ENCODE measurements at regions of chr7 and their contacts with region 1.

Region 1: DNA sequence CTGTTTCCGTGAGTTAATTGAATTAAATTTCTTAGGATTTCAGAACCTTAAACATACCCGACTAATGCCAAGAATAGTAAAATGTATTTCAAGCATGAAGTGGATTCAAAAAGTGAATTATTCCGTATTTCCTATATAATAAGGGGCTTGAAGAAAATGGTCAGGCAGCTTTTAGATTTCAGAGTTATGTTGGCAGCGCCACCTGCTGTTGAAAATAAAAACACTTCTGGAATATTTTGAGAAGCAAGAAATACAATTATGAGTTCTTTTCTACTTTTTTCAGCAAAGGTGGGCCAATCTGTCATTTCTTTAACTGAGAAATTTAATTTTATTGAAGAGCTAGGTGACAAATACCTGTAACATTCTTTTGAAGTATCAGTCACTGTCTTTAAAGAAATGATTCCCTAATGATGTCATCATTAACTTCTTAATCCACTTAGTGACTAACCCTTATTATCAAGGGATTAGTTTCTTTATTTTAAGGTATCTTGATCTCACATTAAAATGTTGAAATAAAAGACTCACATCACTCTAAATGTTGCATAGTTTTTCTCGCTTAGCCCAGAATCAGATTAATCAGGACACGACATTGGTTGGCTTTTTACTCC is 36.6 kb upstream of the AGR3 start:
- DNase-seq: peak; percentile 28
- ATAC-seq: no peak
- H3K4me3 Mint-ChIP-seq: no peak overlapping the region
- H3K27ac Mint-ChIP-seq: no peak overlapping the region
- H3K4me1 Mint-ChIP-seq: peaks cover 12% of the 10 kb centered on the region
- H3K27me3 Mint-ChIP-seq: peaks cover 2% of the 10 kb centered on the region

Region 2: GRCh38 chr7:16078076-16078952 is 840.1 kb before region 1 on chr7:
- CTCF ChIA-PET with region 1: no interaction called
- POLR2A ChIA-PET with region 1: no interaction called
- intact Hi-C with region 1: loop called (anchors 2 to 5 kb)
- DNase-seq: peak; percentile 23
- ATAC-seq: peak; percentile 49
- H3K4me3 Mint-ChIP-seq: no peak overlapping the region
- H3K27ac Mint-ChIP-seq: no peak overlapping the region
- H3K4me1 Mint-ChIP-seq: no peaks in the 10 kb centered on the region
- H3K27me3 Mint-ChIP-seq: no peaks in the 10 kb centered on the region

Region 3: DNA sequence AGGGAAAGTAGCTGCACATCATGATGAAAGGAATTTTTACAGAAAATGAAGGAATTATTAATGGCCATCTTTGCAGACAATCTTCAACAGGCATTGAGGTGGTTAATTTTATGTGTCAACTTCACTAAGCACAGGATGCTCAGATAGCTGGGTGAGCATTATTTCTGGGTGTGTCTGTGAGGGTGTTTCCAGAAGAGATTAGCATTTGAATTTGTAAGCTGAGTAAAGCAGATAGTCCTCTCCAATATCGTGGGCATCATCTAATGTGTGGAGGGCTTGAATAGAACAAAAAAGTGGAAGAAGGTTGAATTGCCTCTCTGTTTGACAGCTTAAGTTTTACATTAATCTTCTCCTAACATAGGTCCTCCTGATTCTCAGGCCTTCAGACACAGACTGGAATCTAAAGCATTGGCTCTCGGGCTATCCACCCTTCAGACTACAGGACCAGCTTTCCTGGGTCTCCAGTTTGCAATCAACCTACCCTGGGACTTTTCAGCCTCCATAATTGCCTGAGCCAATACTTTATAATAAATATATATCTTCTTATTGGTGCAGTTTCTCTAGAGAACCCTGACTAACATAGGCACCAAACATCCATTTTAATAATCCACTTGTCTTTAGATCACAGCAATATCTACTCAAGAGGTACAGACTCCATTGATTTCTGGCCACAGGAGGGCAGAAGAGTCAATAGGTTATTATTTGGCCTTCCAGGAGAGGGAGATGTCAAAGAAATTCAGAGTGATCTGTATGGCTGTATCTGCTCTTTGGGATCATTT is 486.6 kb before region 1 on chr7:
- CTCF ChIA-PET with region 1: no interaction called
- POLR2A ChIA-PET with region 1: no interaction called
- intact Hi-C with region 1: loop called in 1 of 2 experiments (anchors 5 kb)
- DNase-seq: peak; percentile 47
- ATAC-seq: peak; percentile 57
- H3K4me3 Mint-ChIP-seq: no peak overlapping the region
- H3K27ac Mint-ChIP-seq: no peak overlapping the region
- H3K4me1 Mint-ChIP-seq: peaks cover 4% of the 10 kb centered on the region
- H3K27me3 Mint-ChIP-seq: peaks cover 5% of the 10 kb centered on the region

Region 4: GRCh38 chr7:16604054-16604453 is 314.3 kb before region 1 on chr7:
- CTCF ChIA-PET with region 1: interaction called, 5 read pairs
- POLR2A ChIA-PET with region 1: no interaction called
- intact Hi-C with region 1: loop called (anchors 1 to 5 kb)
- DNase-seq: no peak
- ATAC-seq: peak; percentile 42
- H3K4me3 Mint-ChIP-seq: no peak overlapping the region
- H3K27ac Mint-ChIP-seq: no peak overlapping the region
- H3K4me1 Mint-ChIP-seq: no peaks in the 10 kb centered on the region
- H3K27me3 Mint-ChIP-seq: no peaks in the 10 kb centered on the region

Region 5: GRCh38 chr7:16695621-16696237 is 222.7 kb before region 1 on chr7:
- CTCF ChIA-PET with region 1: interaction called, 8 read pairs
- POLR2A ChIA-PET with region 1: no interaction called
- intact Hi-C with region 1: loop called in 1 of 2 experiments (anchors 1 kb)
- DNase-seq: peak; percentile 20
- ATAC-seq: peak; percentile 53
- H3K4me3 Mint-ChIP-seq: no peak overlapping the region
- H3K27ac Mint-ChIP-seq: no peak overlapping the region
- H3K4me1 Mint-ChIP-seq: peaks cover 3% of the 10 kb centered on the region
- H3K27me3 Mint-ChIP-seq: no peaks in the 10 kb centered on the region

Region 6: DNA sequence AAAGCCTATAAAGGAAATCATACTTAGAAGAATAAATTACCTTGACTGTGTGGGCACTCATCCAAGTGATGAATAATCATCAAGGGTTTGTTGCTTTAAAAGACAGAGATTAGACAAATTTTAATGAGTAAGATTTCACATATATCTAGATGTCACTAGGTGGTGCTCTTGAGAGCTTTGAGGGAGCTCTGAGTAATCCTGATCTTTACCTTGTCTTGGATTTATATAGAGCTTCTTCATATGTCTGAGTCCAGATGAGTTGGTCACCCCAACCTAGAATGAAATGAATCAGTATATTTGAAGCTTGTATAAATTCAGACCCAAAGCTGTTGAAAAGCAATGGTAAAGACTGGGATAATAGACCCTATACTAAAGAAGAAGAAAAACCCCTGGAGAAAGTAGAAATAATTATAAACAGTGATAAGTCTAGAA is 117.3 kb before region 1 on chr7:
- CTCF ChIA-PET with region 1: interaction called, 33 read pairs
- POLR2A ChIA-PET with region 1: no interaction called
- intact Hi-C with region 1: loop called (anchors 1 kb)
- DNase-seq: no peak
- ATAC-seq: peak; percentile 88
- H3K4me3 Mint-ChIP-seq: no peak overlapping the region
- H3K27ac Mint-ChIP-seq: no peak overlapping the region
- H3K4me1 Mint-ChIP-seq: no peaks in the 10 kb centered on the region
- H3K27me3 Mint-ChIP-seq: peaks cover 5% of the 10 kb centered on the region

Region 7: DNA sequence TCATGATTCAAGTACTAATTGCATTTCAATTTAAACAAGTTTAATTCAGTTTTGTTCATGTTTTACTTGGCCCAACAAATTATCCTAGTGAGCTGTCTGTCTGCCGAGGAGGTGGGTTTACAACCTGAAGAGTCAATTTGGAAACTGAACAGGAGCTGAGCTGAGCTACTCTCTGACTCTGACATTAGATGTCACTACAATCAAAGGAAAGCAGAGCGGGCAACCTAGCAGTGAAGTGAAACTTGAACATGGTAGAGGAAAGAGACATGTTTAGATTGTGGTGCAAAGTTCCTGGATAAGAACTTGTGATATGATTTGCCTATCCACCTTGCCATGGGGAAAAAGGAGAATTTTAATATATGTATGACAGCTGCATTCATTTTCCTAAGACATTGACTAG is 27.1 kb before region 1 on chr7:
- CTCF ChIA-PET with region 1: interaction called, 29 read pairs
- POLR2A ChIA-PET with region 1: no interaction called
- intact Hi-C with region 1: loop called (anchors 1 kb)
- DNase-seq: peak; percentile 18
- ATAC-seq: peak; percentile 63
- H3K4me3 Mint-ChIP-seq: no peak overlapping the region
- H3K27ac Mint-ChIP-seq: no peak overlapping the region
- H3K4me1 Mint-ChIP-seq: peaks cover 18% of the 10 kb centered on the region
- H3K27me3 Mint-ChIP-seq: peaks cover 1% of the 10 kb centered on the region

Measured in activated CD4-positive, alpha-beta T cell treated with anti-CD3 and anti-CD28 coated beads for 36 hours (primary cell).